GM18951 (cell line): ENCODE measurements at regions of chr16 and their contacts with region 1.

Region 1: GRCh38 chr16:10256784-10257641 is 74.8 kb upstream of the GRIN2A start:
- POLR2A ChIP-seq: no peak

Region 2: GRCh38 chr16:10308305-10309193 is 51.5 kb after region 1 on chr16:
- in situ Hi-C with region 1: loop called (anchors 5 kb)
- POLR2A ChIP-seq: no peak

Region 3: GRCh38 chr16:10356870-10357842 is 100.1 kb after region 1 on chr16:
- in situ Hi-C with region 1: no loop called
- POLR2A ChIP-seq: no peak

Region 4: GRCh38 chr16:10509534-10510025 is 252.6 kb after region 1 on chr16:
- in situ Hi-C with region 1: loop called (anchors 5 kb)
- POLR2A ChIP-seq: no peak

Region 5: GRCh38 chr16:10743610-10744393 is 486.8 kb after region 1 on chr16 and contains the start of gene NUBP1:
- in situ Hi-C with region 1: loop called (anchors 25 kb)
- POLR2A ChIP-seq: peak; percentile 84